ENCODE measurements at regions of chr20 and their contacts with region 1.

Region 1: DNA sequence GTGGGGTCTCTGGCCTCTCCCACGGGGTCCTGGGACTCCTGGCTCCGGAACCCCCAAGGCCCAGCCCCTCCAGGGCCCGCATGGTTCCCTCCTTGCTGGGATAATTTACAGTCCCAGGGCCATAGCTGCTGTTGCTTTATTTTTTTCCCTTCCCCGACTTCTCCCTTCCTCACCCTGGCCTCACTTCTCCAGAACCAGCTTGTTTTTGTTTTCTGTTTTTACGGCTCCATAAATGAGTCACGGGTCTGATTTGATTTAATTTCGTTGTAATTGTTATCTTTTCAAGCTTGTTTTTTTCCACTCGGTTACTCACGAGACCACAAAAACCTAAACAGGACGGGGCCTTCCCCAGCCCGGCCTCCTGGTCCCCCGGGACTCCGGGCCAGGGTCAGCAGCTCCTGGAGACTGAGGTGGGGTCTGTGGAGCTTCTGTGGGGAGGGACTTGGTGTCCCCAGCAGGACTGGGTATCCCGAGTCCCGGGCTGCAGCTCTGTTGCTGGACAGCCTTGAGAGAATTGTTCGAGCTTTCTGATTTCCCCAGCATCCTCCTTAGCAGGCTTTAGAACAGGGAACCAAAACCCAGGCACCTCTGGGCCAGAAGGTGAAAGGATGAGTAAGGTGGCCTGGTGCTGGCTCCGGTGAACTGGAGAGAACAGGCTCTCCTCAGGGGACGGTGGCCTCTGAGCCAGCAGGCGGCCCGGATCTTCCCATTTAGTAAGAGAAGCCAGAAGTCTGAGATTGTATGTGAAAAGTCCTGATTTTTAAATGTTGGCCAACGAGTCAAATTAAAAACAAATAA is 94.9 kb downstream of the CEBPB start:
- DNase-seq: peak; percentile 41
- ATAC-seq: peak; percentile 90
- H3K4me3 Mint-ChIP-seq: peak overlapping the region; percentile 44
- H3K27ac Mint-ChIP-seq: peak overlapping the region; percentile 33
- H3K4me1 Mint-ChIP-seq: peaks cover 28% of the 10 kb centered on the region
- H3K27me3 Mint-ChIP-seq: peaks cover 23% of the 10 kb centered on the region
- CTCF ChIP-seq: no peak

Region 2: DNA sequence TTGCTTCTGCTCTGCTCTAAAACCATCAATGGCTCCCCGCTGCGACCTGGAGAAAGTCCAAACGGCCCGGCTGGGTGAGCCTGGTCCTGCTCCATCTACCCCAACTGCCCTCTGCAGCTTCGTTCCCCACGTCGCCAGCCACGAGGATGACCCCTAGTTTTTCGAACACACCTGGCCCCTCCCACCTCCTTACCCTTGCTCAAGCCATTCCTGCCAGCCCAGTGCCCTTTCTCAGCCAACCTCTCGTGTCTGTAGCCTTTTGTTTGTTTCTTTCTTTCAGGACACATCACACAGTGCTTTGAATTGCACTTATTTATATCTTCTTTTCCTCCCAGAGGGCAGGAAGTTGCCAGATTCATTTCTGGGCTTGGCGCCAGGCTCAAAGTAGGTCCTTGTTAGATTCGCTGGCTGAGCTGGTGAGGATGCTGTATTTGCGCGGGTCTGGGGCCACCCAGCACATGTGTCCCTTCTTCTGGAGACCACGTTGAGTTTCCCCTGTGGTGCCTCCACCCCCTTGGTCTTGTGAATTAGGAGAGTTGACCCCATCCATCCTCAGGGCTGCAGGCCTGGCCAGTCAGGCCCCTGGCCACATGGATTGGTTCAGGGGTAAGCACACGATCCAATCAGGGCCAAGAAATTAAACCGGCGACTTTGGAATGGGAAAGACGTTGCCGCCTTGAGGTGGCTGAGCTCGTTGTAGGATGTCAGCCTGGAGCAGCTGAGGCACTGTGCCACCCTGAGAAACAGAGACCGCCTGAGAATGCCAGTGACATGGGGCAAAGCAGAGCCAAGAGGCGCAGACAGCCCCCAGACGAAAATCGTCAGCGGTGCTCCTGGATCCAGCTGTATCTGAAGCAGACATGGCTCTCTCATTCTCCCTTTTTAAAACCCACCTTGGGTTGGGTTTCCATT is 61.1 kb after region 1 on chr20:
- CTCF ChIA-PET with region 1: no interaction called
- POLR2A ChIA-PET with region 1: interaction called, 6 read pairs
- intact Hi-C with region 1: loop called (anchors 2 kb)
- DNase-seq: no peak
- ATAC-seq: no peak
- H3K4me3 Mint-ChIP-seq: no peak overlapping the region
- H3K27ac Mint-ChIP-seq: no peak overlapping the region
- H3K4me1 Mint-ChIP-seq: peaks cover 21% of the 10 kb centered on the region
- H3K27me3 Mint-ChIP-seq: peaks cover 44% of the 10 kb centered on the region
- CTCF ChIP-seq: no peak

Measured in activated B cell treated with CpG ODN at 0.5 μM for 24 hours (primary cell).